Testis (tissue), 5 donors: ENCODE measurements at regions of chr2 and their contacts with region 1.

Region 1: GRCh38 chr2:64653349-64654062 is at the start of gene SERTAD2:
- DNase-seq: peak; percentile 88
- H3K4me3 ChIP-seq: peak within 1 kb of the TSS; percentile 98
- H3K27ac ChIP-seq: peak within 1 kb of the TSS; percentile 99
- H3K4me1 ChIP-seq: peaks cover 38% of the 10 kb centered on the region
- H3K27me3 ChIP-seq: no peaks in the 10 kb centered on the region
- CTCF ChIP-seq: peak in 2 of 3 experiments; percentile 6 to 7
- POLR2A ChIP-seq: peak; percentile 75
- total RNA-seq, gene SERTAD2: 41.4 to 41.7 TPM

Region 2: GRCh38 chr2:64750817-64751285 is 97.3 kb after region 1 on chr2:
- intact Hi-C with region 1: loop called (anchors 5 kb)
- DNase-seq: no peak
- H3K4me3 ChIP-seq: peak overlapping the region; percentile 86 to 89
- H3K27ac ChIP-seq: peak overlapping the region; percentile 99
- H3K4me1 ChIP-seq: peaks cover 22% of the 10 kb centered on the region
- H3K27me3 ChIP-seq: no peaks in the 10 kb centered on the region
- CTCF ChIP-seq: peak in 1 of 3 experiments; percentile 32
- POLR2A ChIP-seq: peak; percentile 89

Region 3: DNA sequence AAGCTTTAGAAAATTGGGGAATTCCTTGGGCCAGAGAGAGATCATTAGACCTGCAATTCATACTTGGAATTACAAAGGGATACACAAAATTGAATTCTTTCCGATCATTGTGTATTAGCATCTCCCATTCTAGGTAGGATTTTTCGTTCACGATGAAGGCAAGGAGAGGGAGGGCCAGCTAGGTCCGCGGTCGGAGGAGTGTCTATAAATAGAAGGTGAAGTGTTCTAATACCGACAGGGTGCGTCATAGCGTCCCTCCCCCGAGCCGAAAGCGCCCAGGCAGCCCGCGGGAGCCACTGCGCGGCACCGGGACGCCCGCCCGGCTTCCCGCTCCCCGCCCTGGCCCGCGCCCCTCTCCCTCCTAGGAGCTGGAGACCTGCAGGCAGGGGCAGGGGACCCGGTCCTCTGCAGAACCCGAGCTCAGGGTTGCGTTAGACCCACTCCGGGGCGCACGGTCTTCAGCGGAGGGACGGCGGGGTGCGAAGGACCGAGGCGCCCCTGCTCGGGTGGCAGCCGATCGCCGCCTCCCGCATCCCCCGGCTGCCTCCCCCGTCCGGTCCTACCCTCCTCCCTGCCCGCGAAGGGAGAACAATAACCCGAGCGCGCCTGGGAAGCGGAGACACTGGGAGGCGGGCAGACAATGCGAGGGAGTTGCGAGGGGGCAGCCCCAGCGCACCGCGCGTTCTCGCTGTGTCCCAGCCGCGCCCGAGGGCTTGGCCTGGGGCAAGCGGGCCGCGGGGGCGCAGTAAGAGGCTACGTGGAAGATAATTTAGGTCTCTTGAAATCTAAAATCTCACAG is 114.4 kb after region 1 on chr2:
- intact Hi-C with region 1: loop called (anchors 5 kb)
- DNase-seq: peak; percentile 94
- H3K4me3 ChIP-seq: peak overlapping the region; percentile 65 to 67
- H3K27ac ChIP-seq: peak overlapping the region; percentile 91 to 98
- H3K4me1 ChIP-seq: no peaks in the 10 kb centered on the region
- H3K27me3 ChIP-seq: no peaks in the 10 kb centered on the region
- CTCF ChIP-seq: no peak
- POLR2A ChIP-seq: no peak